Head of caudate nucleus (tissue), 42 donors: ENCODE measurements at regions of chr5 and their contacts with region 1.

Region 1: GRCh38 chr5:170434966-170435605 is 45.9 kb upstream of the KCNMB1 start:
- DNase-seq: peak; percentile 33 to 90 (median 76)

Region 2: GRCh38 chr5:170633235-170634081 is 198.4 kb after region 1 on chr5:
- intact Hi-C with region 1: loop called (anchors 1 kb)
- DNase-seq: peak in 12 of 42 donors; percentile 8 to 61 (median 36)

Region 3: DNA sequence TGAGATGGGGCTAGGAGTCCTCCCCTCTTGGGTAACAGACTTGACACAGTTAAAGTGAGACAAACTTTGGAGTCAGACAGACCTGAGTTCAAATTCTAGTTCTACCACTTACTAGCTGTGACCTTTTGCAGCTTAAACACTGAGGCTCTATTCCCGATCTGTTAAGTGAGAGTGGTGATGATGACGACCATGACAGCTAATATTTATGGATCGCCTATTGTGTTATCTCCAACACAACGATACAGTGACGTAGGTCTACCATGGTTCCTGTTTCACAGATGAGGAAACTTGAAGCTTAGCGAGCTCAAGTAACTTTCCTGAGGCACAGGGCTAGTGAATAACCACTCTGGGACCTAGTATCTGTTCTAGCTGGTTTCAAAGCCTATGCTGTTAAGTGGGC is 238.1 kb after region 1 on chr5:
- intact Hi-C with region 1: no loop called
- DNase-seq: no peak